ENCODE measurements at regions of chr7 and their contacts with region 1.

Region 1: GRCh38 chr7:92421676-92422435 is 25.4 kb upstream of the GATAD1 start:
- DNase-seq: no peak
- ATAC-seq: no peak
- H3K4me3 Mint-ChIP-seq: no peak overlapping the region
- H3K27ac Mint-ChIP-seq: no peak overlapping the region
- H3K4me1 Mint-ChIP-seq: peaks cover 24% of the 10 kb centered on the region
- H3K27me3 Mint-ChIP-seq: no peaks in the 10 kb centered on the region; the same call in none of the 2 replicates
- CTCF ChIP-seq: no peak

Region 2: GRCh38 chr7:92436612-92437445 is 15.0 kb after region 1 on chr7:
- CTCF ChIA-PET with region 1: interaction called, 40 read pairs
- POLR2A ChIA-PET with region 1: no interaction called
- DNase-seq: no peak
- ATAC-seq: peak; percentile 68
- H3K4me3 Mint-ChIP-seq: peak overlapping the region; percentile 26; the same call in 1 of the 2 replicates
- H3K27ac Mint-ChIP-seq: peak overlapping the region; percentile 60; the same call in 1 of the 2 replicates
- H3K4me1 Mint-ChIP-seq: peaks cover 43% of the 10 kb centered on the region
- H3K27me3 Mint-ChIP-seq: no peaks in the 10 kb centered on the region
- CTCF ChIP-seq: no peak

Region 3: DNA sequence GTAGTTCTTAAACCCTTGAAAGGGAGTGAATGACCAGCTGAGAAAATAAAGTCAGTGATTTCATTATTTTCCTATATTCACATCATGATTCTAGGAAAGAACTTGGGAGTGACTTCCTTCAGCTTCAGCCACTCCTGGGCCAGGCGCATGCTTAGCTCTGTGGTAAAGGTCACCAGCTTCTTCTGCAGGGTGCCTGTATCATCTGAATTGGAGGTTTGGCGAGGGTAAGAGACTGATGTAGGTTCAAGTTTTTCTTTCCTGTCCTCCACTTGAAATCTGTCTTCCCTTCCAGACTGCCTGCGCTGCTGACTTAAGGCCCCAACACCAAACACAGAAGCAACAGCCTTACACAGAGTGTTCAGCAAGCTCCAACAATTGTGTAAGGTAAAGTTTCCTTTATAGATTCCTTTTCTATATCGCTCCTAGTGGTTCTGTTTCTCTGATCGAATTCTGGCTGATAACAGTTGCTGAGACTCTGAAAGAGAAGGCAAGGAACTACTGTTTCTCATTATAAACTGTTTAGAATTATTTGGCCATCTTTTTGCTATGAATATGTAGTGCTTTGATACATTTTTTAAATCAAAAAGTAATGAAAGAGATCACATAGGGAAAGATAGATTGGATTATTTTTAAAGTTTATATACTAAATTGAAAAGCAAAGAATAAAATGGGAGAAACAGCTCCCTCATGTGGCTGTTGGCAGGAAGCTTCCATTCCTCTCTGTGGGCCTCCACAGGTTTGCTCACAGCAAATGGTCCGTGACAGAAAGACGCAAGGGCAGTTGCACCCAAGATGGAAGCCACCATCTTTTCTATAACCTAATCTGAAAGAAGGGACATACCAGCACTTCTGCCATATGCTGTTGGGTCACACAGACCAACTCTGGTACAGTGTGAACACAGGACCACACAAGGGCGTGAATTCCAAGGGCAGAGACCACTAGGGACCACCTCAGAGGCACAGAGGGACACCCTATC is 39.5 kb after region 1 on chr7:
- CTCF ChIA-PET with region 1: interaction called, 25 read pairs
- POLR2A ChIA-PET with region 1: no interaction called
- DNase-seq: peak; percentile 33
- ATAC-seq: peak; percentile 85
- H3K4me3 Mint-ChIP-seq: no peak overlapping the region
- H3K27ac Mint-ChIP-seq: no peak overlapping the region
- H3K4me1 Mint-ChIP-seq: 0 out of 2 replicates have a peak, but pooled peaks cover 3% of the 10 kb centered on the region
- H3K27me3 Mint-ChIP-seq: no peaks in the 10 kb centered on the region
- CTCF ChIP-seq: peak; percentile 25; the same call in 1 of the 2 replicates

Region 4: GRCh38 chr7:92534572-92534971 is 112.7 kb after region 1 on chr7:
- CTCF ChIA-PET with region 1: no interaction called
- POLR2A ChIA-PET with region 1: no interaction called
- DNase-seq: no peak
- ATAC-seq: no peak
- H3K4me3 Mint-ChIP-seq: no peak overlapping the region
- H3K27ac Mint-ChIP-seq: no peak overlapping the region
- H3K4me1 Mint-ChIP-seq: peaks cover 2% of the 10 kb centered on the region; the same call in 1 of the 2 replicates
- H3K27me3 Mint-ChIP-seq: no peaks in the 10 kb centered on the region
- CTCF ChIP-seq: no peak

Region 5: DNA sequence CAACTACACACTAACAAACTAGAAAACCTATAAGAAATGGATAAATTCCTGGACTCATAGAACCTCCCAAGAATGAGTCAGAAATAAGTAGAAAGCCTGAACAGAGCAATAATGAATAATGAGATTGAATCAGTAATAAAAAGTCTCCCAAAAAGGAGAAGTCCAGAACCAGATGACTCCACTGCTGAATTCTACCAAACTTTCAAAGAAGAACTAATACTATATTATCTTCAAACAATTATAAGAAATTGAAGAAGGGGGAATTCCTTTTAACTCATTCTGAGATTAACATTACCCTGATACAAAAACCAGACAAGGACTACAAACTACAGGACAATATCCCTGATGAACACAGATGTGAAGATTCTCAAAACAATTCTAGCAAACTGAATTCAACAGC is 462.4 kb after region 1 on chr7:
- CTCF ChIA-PET with region 1: no interaction called
- POLR2A ChIA-PET with region 1: no interaction called
- DNase-seq: no peak
- ATAC-seq: no peak
- H3K4me3 Mint-ChIP-seq: no peak overlapping the region
- H3K27ac Mint-ChIP-seq: no peak overlapping the region
- H3K4me1 Mint-ChIP-seq: no peaks in the 10 kb centered on the region
- H3K27me3 Mint-ChIP-seq: peaks cover 11% of the 10 kb centered on the region; the same call in 1 of the 2 replicates
- CTCF ChIP-seq: no peak

Measured in WTC11 (cell line).